ENCODE measurements at regions of chr18 and their contacts with region 1.

Region 1: DNA sequence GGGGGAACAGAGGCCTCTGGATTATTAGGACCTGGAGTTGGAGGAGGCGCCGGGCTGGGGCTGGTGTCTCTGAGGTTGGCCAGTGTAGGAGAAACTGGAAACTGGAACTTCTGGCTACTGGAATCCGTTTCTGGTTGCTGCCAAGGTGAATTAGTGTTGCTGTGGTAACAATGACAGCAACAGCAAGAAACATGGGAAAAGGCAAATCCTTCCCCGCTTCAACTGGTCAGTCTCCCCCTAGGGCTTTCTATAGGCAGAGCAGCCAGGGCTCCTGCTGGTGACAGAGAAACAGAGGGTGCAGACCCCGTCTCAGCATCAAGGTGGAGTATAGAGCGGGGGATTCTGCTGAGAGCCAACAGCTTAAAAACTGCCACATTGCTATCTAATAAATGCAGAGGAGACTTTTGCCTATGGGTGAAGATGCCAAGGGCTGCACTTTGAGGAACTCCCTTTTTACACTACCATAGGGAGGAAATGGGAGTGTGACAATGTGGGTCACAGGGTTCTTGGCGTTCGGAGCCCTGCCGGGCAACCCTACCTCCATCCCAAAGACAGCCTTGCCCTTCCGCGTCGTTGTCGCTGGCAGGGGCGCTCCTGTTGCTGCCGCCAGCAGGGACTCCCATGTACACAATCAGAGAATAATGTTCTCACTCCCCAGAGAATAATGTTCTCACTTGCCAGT is 81.4 kb upstream of the CABLES1 start:
- DNase-seq: peak in 2 of 3 donors; percentile 20 to 30
- H3K4me3 ChIP-seq: no peak overlapping the region
- H3K4me3 Mint-ChIP-seq: peak overlapping the region; percentile 7 to 64
- H3K27ac ChIP-seq: no peak overlapping the region
- H3K27ac Mint-ChIP-seq: peak overlapping the region in 3 of 7 donors; percentile 18 to 31 (median 21)
- H3K4me1 ChIP-seq: peaks cover 24% of the 10 kb centered on the region in 2 donors
- H3K4me1 Mint-ChIP-seq: peaks cover 25% of the 10 kb centered on the region
- H3K27me3 ChIP-seq: no peaks in the 10 kb centered on the region
- H3K27me3 Mint-ChIP-seq: peaks cover 5 to 16% (median 10%) of the 10 kb centered on the region in 3 donors
- CTCF ChIP-seq: peak; percentile 19

Region 2: DNA sequence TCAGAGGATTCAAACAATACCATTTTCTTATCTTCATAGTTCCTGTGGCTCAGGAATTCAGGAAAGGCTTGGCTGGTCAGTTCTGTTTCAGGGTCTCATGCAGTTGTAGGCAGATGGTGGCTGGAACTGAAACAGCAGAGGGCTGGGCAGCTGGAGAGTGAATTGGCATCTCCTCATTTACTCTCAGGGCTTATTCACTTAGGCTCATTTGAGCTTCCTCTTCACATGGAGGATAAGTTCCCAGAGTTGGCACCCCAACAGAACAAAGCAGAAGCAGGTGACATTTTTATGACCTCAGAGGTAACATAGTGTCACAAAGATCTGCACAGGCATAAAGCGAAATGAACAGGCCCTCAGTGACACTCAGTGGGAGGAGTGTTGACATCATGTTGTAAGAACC is 54.7 kb before region 1 on chr18:
- intact Hi-C with region 1: no loop called
- DNase-seq: no peak
- H3K4me3 ChIP-seq: no peak overlapping the region
- H3K4me3 Mint-ChIP-seq: no peak overlapping the region
- H3K27ac ChIP-seq: no peak overlapping the region
- H3K27ac Mint-ChIP-seq: no peak overlapping the region
- H3K4me1 ChIP-seq: no peaks in the 10 kb centered on the region
- H3K4me1 Mint-ChIP-seq: no peaks in the 10 kb centered on the region
- H3K27me3 ChIP-seq: no peaks in the 10 kb centered on the region
- H3K27me3 Mint-ChIP-seq: no peaks in the 10 kb centered on the region
- CTCF ChIP-seq: no peak

Region 3: DNA sequence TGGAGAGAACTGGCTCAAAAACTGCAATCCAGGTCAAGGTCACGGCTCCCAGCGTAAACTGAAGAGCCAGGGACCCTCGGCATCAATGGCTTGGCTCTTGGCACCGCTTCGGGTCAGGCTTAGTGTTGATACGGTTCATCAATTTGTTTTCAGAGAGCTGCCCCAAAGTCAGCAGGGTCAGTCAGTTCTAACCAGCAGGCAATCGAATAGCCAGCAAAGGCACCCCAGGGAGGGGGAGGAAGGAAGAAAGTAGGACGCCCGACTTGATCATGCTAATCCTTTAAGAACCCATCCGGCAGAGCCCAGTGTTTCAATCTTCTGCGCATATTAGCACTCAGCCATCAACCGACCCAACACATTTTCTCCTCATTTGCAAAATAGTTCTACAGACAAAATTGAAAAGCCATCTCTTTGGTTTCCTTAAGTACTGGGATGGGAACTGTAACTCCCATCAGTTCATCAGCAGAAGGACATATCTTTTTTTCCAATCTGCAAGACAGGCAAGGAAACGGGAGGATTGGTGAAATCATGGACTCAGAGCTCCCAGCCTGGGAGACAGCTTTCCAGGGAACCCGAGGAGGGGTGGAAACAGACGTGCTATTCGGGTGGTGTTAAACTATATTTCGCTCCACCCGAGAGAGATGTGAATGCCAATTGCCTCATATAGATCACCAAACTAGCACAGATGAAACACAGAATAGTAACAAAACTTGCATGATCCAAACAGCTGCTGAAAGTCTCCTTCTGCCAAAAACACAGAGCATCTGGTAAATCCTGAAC is 40.7 kb after region 1 on chr18:
- intact Hi-C with region 1: loop called in 1 of 2 experiments (anchors 5 kb)
- DNase-seq: no peak
- H3K4me3 ChIP-seq: no peak overlapping the region
- H3K4me3 Mint-ChIP-seq: no peak overlapping the region
- H3K27ac ChIP-seq: no peak overlapping the region
- H3K27ac Mint-ChIP-seq: peak overlapping the region in 1 of 7 donors; percentile 23
- H3K4me1 ChIP-seq: peaks cover 24 to 27% of the 10 kb centered on the region in 2 donors
- H3K4me1 Mint-ChIP-seq: peaks cover 21% of the 10 kb centered on the region
- H3K27me3 ChIP-seq: no peaks in the 10 kb centered on the region
- H3K27me3 Mint-ChIP-seq: peaks cover 3 to 14% (median 5%) of the 10 kb centered on the region in 3 donors
- CTCF ChIP-seq: no peak

Region 4: DNA sequence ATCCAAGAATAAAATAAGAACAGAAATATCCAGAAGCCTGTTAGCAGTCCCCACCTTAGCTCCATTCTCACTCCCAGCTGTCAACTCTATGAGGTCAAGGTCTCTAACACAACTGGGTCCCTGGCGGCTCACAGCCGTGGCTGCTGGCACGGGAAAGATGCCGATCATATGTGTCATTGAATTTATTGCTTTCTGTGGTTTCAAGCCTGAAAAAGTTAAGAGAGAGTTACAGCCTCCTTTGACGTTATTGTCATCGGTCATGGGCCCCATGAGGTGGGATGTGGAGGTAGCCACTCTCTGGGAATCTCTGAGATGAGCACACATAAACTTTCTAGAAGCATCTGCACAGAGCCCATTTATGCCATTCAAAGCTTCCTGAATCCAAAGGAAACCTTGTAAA is 52.7 kb after region 1 on chr18:
- intact Hi-C with region 1: loop called in 1 of 2 experiments (anchors 10 kb)
- DNase-seq: no peak
- H3K4me3 ChIP-seq: no peak overlapping the region
- H3K4me3 Mint-ChIP-seq: no peak overlapping the region
- H3K27ac ChIP-seq: no peak overlapping the region
- H3K27ac Mint-ChIP-seq: peak overlapping the region in 1 of 7 donors; percentile 27
- H3K4me1 ChIP-seq: no peaks in the 10 kb centered on the region
- H3K4me1 Mint-ChIP-seq: peaks cover 11% of the 10 kb centered on the region
- H3K27me3 ChIP-seq: no peaks in the 10 kb centered on the region
- H3K27me3 Mint-ChIP-seq: peaks cover 1 to 17% (median 10%) of the 10 kb centered on the region in 3 donors
- CTCF ChIP-seq: no peak

Measured in CD14-positive monocyte (primary cell).